ENCODE measurements at regions of chr3 and their contacts with region 1.

Region 1: GRCh38 chr3:165339753-165340152 is 143.6 kb upstream of the SLITRK3 start:
- DNase-seq: peak; percentile 31

Region 2: DNA sequence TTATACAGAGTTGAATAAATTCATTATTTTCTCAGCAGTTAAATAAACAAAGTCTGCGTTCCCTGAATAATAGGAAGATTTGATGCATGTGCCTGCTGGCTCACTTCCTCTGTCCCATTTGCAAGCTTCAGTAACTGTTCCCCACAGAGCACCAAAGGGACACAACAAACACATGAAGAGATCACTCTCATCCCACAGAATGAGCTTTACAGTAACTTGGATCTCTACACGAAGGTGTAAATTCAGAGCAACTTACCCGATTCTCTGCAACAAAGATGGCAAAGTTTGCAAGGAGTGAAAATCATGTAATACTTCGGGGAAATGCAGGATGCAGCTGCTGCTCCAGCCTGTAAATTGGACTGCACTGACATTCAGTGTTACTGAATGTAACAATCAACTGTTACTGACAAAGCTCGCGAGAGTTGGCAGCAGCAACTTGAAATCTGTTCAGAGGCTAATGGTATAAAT is 497.3 kb after region 1 on chr3 and contains the start of gene BCHE:
- in situ Hi-C with region 1: loop called (anchors 25 kb)
- DNase-seq: peak; percentile 89
- total RNA-seq, gene BCHE: 78.5 and 83.1 TPM in 2 replicates

Measured in Caki2 (cell line).